ENCODE measurements at regions of chr6 and their contacts with region 1.

Region 1: DNA sequence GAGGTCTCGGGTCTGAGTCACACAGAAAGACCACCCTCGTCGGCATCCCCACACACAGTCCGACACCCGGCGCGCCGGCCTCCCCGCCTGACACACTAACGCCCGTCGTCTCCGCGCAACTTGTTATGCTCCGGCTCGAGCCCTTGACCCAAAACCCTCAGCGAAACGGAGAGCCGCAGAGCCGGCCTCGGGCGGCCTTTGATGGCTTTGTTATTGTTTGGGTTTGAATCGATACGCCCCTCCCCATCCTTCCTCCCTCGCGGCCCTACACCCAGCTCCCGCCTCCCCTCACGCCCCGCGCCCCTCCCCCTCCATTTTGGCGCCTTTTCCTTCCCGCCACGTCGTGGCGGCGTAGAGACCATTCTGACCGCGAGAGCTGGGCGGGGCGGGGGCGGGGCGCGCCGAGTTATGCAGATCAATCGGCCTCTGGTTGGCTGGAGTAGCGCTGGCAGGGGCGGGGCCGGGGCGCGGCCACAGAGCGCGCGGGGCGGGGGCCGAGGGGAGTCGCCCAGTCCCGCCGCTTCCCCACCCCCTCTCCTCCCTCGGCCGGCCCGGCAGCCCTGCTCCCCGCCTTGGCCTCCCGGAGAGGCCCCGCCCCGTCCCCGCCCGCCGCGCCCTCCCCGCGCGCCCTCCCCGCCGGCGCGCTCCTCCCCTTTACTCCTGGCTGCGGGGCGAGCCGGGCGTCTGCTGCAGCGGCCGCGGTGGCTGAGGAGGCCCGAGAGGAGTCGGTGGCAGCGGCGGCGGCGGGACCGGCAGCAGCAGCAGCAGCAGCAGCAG is at the start of gene PIM1:
- DNase-seq: peak; percentile 97 to 100 (median 99)

Region 2: DNA sequence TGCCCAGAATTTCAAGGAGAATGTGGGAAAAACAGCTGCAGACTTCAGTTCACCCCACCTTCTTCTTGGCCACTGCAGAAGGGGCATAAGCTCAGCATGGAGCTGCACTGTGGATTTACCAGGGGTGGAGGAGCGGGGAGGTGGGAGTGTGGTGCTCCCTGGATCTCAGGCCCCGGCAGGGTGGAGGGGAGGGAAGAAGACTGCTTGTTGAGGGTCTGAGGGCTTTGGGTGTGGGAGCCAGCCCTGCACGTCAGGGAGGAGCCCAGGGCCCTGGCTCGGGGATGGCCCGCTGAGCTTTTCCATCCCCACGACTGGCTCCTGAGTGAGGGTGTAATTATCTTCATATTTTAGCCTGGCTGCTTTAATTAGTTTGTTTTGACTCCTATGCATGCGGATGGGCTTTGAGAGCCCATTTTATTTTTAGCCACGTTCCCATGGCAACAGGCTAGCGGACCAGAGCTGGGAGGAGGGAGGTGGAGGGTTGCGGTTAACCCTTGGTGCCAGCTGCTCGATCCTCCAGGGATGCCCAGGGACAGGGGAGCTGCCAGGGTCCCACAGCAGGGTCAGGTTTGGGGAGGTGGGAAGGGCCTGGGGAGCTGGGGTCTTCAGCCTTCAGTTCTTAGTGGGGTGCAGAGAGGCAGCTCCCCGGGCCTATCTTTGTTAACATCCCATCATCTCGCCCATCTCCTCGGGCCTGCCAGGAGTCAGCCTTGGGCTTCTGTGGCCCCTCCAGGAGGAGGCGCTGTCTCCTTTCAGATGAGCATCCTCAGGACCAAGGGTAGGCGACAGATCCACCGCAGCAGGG is 403.9 kb before region 1 on chr6:
- intact Hi-C with region 1: loop called (anchors 5 kb)
- DNase-seq: peak; percentile 72 to 98 (median 86)

Region 3: DNA sequence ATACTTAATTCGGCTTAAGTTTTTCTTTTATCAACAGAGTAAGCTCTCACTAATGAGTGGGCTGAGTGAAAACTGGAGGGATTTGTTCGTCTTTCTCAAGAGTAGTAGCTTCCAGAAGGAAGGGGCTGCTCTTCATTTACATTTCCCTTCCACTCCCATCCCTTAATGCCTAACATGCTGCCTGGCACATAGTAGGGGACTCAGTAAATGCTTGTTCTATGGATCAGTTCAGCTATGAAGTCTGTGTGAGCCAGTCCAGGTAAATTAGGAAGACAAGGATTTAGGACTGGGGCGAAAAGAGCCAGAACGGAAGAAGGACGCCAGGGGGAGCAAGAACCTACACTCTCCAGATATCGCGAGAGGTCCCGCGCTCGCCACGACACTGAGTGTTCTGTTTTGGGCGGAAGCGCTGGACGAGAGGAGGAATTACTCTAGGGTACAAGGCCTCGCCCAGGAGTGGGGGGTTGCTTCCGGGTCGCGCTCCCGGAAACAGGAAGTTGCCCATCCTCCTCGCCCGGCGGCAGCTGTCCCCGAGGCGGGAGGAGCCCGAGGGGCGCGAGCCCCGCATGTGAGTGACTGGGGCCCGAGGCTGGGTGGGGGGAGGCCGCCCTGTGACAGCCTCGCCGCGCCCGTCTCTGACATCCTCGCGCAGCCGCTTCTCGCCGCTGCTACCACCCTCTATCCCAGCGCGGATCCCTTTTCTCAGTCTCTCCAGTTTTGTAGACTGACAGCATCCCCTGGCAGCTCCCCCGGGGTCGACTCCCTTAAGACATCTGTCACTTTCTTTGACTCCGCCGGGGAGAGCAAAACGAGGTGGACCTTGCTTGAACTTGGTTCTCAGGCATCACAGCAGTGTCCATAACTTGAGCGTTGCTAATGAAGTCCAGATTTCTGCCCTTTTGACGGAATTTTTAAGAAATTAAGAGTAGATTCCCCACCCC is 284.0 kb before region 1 on chr6 and contains the start of gene C6orf89:
- intact Hi-C with region 1: loop called (anchors 10 kb)
- DNase-seq: peak; percentile 97 to 100 (median 98)

Region 4: GRCh38 chr6:36985808-36986703 is 183.6 kb before region 1 on chr6 and contains the start of gene MTCH1:
- intact Hi-C with region 1: loop called (anchors 1 kb)
- DNase-seq: peak; percentile 84 to 99 (median 89)

Region 5: DNA sequence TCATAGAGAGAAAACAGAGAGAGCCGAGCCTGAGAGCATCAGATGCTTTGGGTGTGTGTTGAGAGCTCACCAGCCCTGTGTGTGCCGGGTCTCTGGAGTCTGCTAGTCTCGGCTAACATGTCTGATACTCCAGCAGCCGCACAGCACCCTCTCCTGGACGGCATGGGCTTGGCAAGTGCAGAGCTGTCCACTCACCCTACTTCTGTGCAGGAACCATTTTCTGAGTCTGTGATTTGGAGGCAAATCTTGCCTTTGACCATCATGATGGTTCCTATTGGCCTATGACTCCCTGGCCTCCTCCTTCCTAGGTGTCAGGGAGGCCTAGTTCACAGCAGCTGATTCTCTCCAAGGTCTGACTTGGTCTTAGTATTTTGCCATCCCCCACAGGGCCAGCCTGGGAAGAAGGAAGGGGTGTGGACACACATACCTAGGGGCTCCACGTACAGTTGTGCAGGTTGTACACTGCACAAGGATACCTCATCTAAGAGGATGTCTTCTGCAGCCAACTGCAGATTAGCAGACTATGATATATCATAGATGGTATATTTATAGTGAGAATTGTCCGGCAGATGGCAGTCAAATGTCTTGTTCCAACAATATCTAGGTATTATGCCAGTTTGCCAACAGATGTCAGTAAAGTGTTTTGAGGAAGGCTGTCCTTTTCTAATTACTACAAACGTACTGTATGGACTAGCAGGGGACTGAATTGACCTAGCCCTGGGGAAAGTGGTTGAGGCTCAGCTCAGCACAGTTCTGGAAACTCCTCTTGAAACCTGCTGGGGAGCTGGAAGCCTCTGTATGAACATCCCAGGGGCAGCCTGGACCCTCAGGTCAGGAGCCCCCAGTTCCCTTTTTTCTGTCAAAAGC is 151.3 kb before region 1 on chr6:
- intact Hi-C with region 1: loop called (anchors 1 kb)
- DNase-seq: peak; percentile 85 to 99 (median 94)

Region 6: GRCh38 chr6:37051138-37052026 is 118.3 kb before region 1 on chr6:
- intact Hi-C with region 1: loop called (anchors 1 kb)
- DNase-seq: peak; percentile 86 to 99 (median 96)

Region 7: GRCh38 chr6:37102279-37103168 is 67.2 kb before region 1 on chr6:
- intact Hi-C with region 1: loop called (anchors 1 kb)
- DNase-seq: peak; percentile 77 to 98 (median 88)